Mammary epithelial cell (primary cell): ENCODE measurements at regions of chr13 and their contacts with region 1.

Region 1: GRCh38 chr13:95301183-95301967 is at the start of gene ABCC4:
- DNase-seq: peak; percentile 72
- H3K4me3 ChIP-seq: peak within 1 kb of the TSS; percentile 64 to 94 (median 75)
- H3K27ac ChIP-seq: peak within 1 kb of the TSS; percentile 45
- H3K4me1 ChIP-seq: peaks cover 12% of the 10 kb centered on the region
- H3K27me3 ChIP-seq: no peaks in the 10 kb centered on the region
- CTCF ChIP-seq: no peak
- total RNA-seq, gene ABCC4: 4.0 to 8.1 TPM

Region 2: GRCh38 chr13:94860981-94861407 is 440.4 kb before region 1 on chr13:
- CTCF ChIA-PET with region 1: no interaction called
- dilution Hi-C with region 1: no loop called
- in situ Hi-C with region 1: no loop called
- intact Hi-C with region 1: no loop called
- DNase-seq: no peak
- H3K4me3 ChIP-seq: no peak overlapping the region
- H3K27ac ChIP-seq: no peak overlapping the region
- H3K4me1 ChIP-seq: no peaks in the 10 kb centered on the region
- H3K27me3 ChIP-seq: peaks cover 6% of the 10 kb centered on the region
- CTCF ChIP-seq: no peak

Region 3: GRCh38 chr13:95256086-95256485 is 45.3 kb before region 1 on chr13:
- CTCF ChIA-PET with region 1: interaction called, 3 read pairs
- dilution Hi-C with region 1: no loop called
- in situ Hi-C with region 1: no loop called
- intact Hi-C with region 1: loop called (anchors 5 kb)
- DNase-seq: peak; percentile 93
- H3K4me3 ChIP-seq: no peak overlapping the region
- H3K27ac ChIP-seq: no peak overlapping the region
- H3K4me1 ChIP-seq: peaks cover 28% of the 10 kb centered on the region
- H3K27me3 ChIP-seq: no peaks in the 10 kb centered on the region
- CTCF ChIP-seq: no peak

Region 4: DNA sequence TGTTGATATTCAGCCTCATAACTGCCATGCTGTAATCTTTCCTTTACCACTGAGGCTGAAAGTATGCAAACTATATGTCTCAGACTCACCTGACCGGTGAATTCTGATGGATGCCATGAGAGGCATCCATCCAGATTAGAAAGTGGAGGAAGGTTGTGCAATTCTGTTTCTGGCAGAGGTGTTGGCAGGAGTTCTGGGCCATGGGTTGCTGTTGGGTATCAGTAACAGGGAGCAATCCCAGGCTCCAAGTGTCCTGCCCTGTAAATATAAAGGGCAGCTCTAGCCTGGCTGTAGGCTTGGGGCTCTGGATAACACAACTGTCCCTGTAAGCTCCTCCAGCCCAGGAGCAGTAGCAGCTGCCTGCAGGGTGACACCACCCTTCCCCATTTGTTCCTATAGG is 77.2 kb after region 1 on chr13:
- CTCF ChIA-PET with region 1: interaction called, 12 read pairs
- dilution Hi-C with region 1: no loop called
- in situ Hi-C with region 1: no loop called
- intact Hi-C with region 1: loop called (anchors 1 kb)
- DNase-seq: no peak
- H3K4me3 ChIP-seq: no peak overlapping the region
- H3K27ac ChIP-seq: no peak overlapping the region
- H3K4me1 ChIP-seq: peaks cover 2% of the 10 kb centered on the region
- H3K27me3 ChIP-seq: no peaks in the 10 kb centered on the region
- CTCF ChIP-seq: no peak

Region 5: DNA sequence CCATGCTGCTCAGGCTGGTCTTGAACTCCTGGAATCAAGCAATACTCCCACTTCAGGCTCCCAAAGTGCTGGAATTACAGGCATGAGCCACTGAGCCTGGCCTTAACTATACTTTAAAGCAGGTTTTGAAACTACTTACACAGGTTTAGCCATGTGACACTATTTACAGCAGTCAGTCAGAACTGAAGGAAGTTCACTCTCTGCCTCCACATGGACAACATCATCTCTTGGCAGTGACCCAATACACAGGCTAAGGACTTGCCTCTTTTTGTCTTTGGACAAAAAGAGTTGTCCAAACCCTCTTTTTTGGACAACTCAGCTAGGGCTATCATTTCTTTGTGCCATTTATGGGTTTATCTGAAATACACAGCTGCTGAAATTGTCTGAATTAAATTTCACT is 162.2 kb after region 1 on chr13:
- CTCF ChIA-PET with region 1: no interaction called
- dilution Hi-C with region 1: no loop called
- in situ Hi-C with region 1: no loop called
- intact Hi-C with region 1: no loop called
- DNase-seq: peak; percentile 12
- H3K4me3 ChIP-seq: no peak overlapping the region
- H3K27ac ChIP-seq: no peak overlapping the region
- H3K4me1 ChIP-seq: no peaks in the 10 kb centered on the region
- H3K27me3 ChIP-seq: no peaks in the 10 kb centered on the region
- CTCF ChIP-seq: no peak

Region 6: GRCh38 chr13:95480131-95480545 is 178.8 kb after region 1 on chr13:
- CTCF ChIA-PET with region 1: no interaction called
- dilution Hi-C with region 1: no loop called
- in situ Hi-C with region 1: no loop called
- intact Hi-C with region 1: loop called (anchors 2 kb)
- DNase-seq: no peak
- H3K4me3 ChIP-seq: no peak overlapping the region
- H3K27ac ChIP-seq: no peak overlapping the region
- H3K4me1 ChIP-seq: peaks cover 12% of the 10 kb centered on the region
- H3K27me3 ChIP-seq: no peaks in the 10 kb centered on the region
- CTCF ChIP-seq: no peak

Region 7: GRCh38 chr13:95754069-95754468 is 452.7 kb after region 1 on chr13:
- CTCF ChIA-PET with region 1: no interaction called
- dilution Hi-C with region 1: no loop called
- in situ Hi-C with region 1: no loop called
- intact Hi-C with region 1: no loop called
- DNase-seq: no peak
- H3K4me3 ChIP-seq: no peak overlapping the region
- H3K27ac ChIP-seq: no peak overlapping the region
- H3K4me1 ChIP-seq: peaks cover 3% of the 10 kb centered on the region
- H3K27me3 ChIP-seq: no peaks in the 10 kb centered on the region
- CTCF ChIP-seq: no peak